ENCODE measurements at regions of chr11 and their contacts with region 1.

Region 1: GRCh38 chr11:103183981-103184611 is 74.9 kb downstream of the DYNC2H1 start:
- DNase-seq: no peak
- H3K4me3 Mint-ChIP-seq: no peak overlapping the region
- H3K27ac Mint-ChIP-seq: no peak overlapping the region
- H3K4me1 Mint-ChIP-seq: peaks cover 3% of the 10 kb centered on the region
- H3K27me3 Mint-ChIP-seq: no peaks in the 10 kb centered on the region

Region 2: GRCh38 chr11:102831489-102832440 is 352.3 kb before region 1 on chr11:
- CTCF ChIA-PET with region 1: no interaction called
- intact Hi-C with region 1: no loop called
- DNase-seq: peak; percentile 54
- H3K4me3 Mint-ChIP-seq: peak overlapping the region; percentile 19
- H3K27ac Mint-ChIP-seq: no peak overlapping the region
- H3K4me1 Mint-ChIP-seq: no peaks in the 10 kb centered on the region
- H3K27me3 Mint-ChIP-seq: peaks cover 26% of the 10 kb centered on the region

Region 3: GRCh38 chr11:102914238-102915043 is 269.7 kb before region 1 on chr11:
- CTCF ChIA-PET with region 1: no interaction called
- intact Hi-C with region 1: loop called (anchors 10 kb)
- DNase-seq: peak; percentile 30
- H3K4me3 Mint-ChIP-seq: no peak overlapping the region
- H3K27ac Mint-ChIP-seq: no peak overlapping the region
- H3K4me1 Mint-ChIP-seq: no peaks in the 10 kb centered on the region
- H3K27me3 Mint-ChIP-seq: peaks cover 11% of the 10 kb centered on the region

Region 4: DNA sequence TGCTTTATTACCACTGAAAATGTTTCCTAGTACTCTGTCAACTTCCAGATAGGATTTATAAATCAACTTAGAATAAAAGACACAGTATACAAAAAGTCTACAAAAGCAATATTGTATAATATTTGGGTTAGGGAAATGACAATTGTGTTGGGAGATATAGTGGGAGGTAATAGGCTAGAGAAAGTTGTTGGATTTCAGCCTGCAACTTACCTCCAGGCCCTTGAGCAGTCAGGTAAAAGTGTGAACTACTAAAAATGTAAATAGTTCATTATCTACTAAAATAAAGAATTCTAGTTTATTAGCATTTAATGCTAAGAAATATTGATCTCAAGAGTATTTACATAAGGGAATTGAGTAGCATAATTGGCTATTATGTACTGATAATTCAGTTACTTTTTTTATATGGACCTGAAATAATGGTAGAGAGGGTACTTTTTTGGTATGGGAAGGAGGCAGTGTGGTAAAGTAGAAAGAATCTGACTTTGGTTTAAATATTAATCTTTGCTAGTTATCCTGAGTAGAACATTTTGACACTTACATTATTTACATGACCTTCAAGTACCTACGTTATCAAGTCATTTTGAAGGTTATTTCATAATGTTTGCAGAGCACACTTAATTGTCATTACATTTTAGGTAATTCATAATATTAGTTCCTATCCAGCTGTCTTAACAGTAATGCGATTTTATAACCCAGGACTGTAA is 19.9 kb before region 1 on chr11:
- CTCF ChIA-PET with region 1: no interaction called
- intact Hi-C with region 1: no loop called
- DNase-seq: no peak
- H3K4me3 Mint-ChIP-seq: no peak overlapping the region
- H3K27ac Mint-ChIP-seq: no peak overlapping the region
- H3K4me1 Mint-ChIP-seq: no peaks in the 10 kb centered on the region
- H3K27me3 Mint-ChIP-seq: no peaks in the 10 kb centered on the region